ENCODE measurements at regions of chr5 and their contacts with region 1.

Region 1: GRCh38 chr5:108748401-108749127 is 867 bp downstream of the FER start:
- DNase-seq: peak; percentile 99 to 100
- H3K4me3 ChIP-seq: peak overlapping the region; percentile 86
- H3K27ac ChIP-seq: peak overlapping the region; percentile 97 to 99
- H3K4me1 ChIP-seq: peaks cover 0 to 46% (median 7%) of the 10 kb centered on the region in 4 donors
- H3K27me3 ChIP-seq: no peaks in the 10 kb centered on the region
- CTCF ChIP-seq: peak in 1 of 2 experiments; percentile 27

Region 2: DNA sequence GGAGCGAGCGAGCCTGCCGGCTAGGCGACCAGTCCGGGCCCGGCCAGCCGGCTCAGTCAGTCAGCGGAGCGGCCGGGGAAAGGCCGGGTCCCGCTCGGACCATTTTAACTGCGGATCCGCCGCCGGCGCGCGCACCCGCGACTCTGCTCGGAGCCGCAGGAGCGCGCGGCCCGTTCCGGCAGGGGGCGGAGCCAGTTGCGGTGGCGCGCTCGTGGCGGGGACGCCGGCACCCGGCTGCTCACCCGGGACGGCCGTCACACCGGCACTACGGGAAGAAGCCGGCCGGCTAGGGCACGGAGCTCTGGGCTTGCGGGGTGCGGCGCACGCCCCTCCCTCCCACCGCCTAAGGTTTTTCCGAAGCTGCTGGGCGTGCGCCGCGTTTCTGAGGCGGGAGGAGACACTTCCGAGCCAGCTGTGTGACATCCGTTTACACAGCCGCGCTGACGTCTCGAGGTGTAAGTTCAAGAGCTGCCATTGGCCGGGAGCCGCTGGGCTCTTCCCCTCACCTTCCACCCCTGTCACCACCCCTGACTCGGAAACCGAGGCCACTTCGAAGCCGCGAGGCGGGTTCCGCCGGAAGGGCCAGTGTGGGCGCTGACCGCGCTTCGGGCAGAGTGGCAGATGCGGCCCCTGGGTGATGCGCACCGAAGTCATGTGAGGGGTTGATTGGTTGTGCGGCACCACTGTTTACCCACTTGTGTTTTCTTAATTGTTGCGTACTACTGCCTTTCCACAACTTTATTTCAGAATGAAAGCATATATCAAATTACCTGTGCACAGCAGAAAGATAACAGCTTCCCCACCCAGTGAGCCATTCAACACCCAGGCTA is 366.4 kb before region 1 on chr5 and contains the start of gene FBXL17:
- intact Hi-C with region 1: loop called (anchors 10 kb)
- DNase-seq: peak; percentile 93 to 96
- H3K4me3 ChIP-seq: peak within 1 kb of the TSS; percentile 65 to 97
- H3K27ac ChIP-seq: peak within 1 kb of the TSS; percentile 90 to 100
- H3K4me1 ChIP-seq: peaks cover 0 to 39% (median 20%) of the 10 kb centered on the region in 4 donors
- H3K27me3 ChIP-seq: no peaks in the 10 kb centered on the region
- CTCF ChIP-seq: no peak

Region 3: GRCh38 chr5:108670591-108671289 is 77.8 kb before region 1 on chr5:
- intact Hi-C with region 1: no loop called
- DNase-seq: no peak
- H3K4me3 ChIP-seq: no peak overlapping the region
- H3K27ac ChIP-seq: no peak overlapping the region
- H3K4me1 ChIP-seq: no peaks in the 10 kb centered on the region
- H3K27me3 ChIP-seq: no peaks in the 10 kb centered on the region
- CTCF ChIP-seq: no peak

Region 4: DNA sequence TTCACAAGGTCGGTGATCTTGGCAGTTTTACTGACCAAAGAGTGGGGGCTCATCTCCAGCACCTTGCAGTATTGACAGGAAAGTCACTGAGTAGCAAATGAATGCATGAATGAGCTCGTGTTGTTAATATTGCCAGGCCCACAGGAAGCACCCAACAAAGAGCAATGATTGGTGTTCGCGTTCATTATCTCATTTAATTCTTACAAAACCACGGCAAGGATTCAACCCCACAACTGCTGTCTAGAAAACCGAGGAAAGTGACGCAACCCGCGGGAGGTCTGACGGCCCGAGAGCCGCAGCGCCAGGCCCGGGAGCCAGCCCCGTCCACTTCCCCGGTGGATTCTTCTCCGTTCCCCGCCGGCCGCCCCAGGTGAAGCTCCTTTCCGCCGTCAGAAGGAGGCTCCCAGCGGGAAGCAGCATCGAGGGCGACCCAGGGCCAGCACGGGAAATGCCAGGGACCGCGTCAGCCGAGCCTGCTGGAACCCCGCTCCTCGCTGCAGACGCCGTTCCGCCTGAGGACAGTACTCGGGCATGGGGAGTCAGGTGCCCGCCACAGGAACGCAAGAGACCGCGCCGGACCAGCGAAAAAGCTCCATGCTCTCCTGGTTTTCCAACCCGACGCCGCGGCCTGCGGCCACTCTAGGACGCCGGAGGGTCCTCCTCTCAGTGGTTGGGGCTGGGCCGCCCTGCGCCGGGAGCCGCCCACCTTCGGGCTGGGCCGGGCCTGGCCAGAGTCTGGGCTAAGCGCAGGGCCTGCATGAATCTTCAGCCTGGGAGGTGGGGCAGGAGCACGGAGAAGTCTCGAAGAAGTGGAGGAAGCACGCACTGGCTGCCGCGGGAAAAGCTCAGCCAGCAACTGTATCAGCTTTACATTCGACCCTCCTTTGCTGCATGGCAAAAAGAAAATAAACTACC is 20.7 kb before region 1 on chr5:
- intact Hi-C with region 1: loop called (anchors 2 kb)
- DNase-seq: peak; percentile 92 to 96
- H3K4me3 ChIP-seq: peak overlapping the region; percentile 93 to 95
- H3K27ac ChIP-seq: peak overlapping the region; percentile 96
- H3K4me1 ChIP-seq: peaks cover 0 to 19% (median 7%) of the 10 kb centered on the region in 4 donors
- H3K27me3 ChIP-seq: no peaks in the 10 kb centered on the region
- CTCF ChIP-seq: no peak

Region 5: GRCh38 chr5:109136906-109137305 is 388.3 kb after region 1 on chr5:
- intact Hi-C with region 1: no loop called
- DNase-seq: no peak
- H3K4me3 ChIP-seq: no peak overlapping the region
- H3K27ac ChIP-seq: no peak overlapping the region
- H3K4me1 ChIP-seq: peaks cover 0 to 32% (median 6%) of the 10 kb centered on the region in 4 donors
- H3K27me3 ChIP-seq: no peaks in the 10 kb centered on the region
- CTCF ChIP-seq: no peak

Region 6: DNA sequence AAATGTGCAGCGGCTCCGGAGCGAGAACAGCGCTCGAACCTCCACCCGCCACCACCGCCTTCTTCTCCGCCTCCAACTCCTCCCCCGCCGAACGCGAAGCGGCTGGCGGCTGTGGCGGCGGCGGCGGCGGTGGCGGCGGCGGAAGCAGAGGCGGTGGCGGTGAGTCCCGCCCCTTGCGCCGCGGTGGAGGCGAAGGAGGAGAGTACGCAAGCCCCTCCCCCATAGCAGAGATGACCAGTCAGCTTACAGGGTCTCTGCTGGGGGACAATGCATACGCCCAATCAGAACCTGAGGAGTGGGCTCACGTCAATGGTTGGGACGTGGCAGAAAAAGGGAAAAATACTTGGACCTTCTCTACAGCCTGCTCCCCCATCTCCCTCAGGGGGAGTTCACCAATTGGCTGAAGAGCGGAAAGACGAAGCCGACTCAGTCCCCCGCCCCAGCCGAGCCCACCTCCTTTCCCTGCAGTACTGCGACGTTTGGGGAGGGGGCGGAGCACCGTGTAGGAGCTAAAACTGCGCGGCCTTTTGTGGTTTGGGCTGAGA is 661.4 kb after region 1 on chr5 and contains the start of gene PJA2:
- intact Hi-C with region 1: loop called (anchors 1 kb)
- DNase-seq: peak; percentile 100
- H3K4me3 ChIP-seq: peak within 1 kb of the TSS; percentile 84 to 93
- H3K27ac ChIP-seq: peak within 1 kb of the TSS; percentile 97 to 100
- H3K4me1 ChIP-seq: peaks cover 0 to 59% (median 24%) of the 10 kb centered on the region in 4 donors
- H3K27me3 ChIP-seq: no peaks in the 10 kb centered on the region
- CTCF ChIP-seq: peak; percentile 34 to 52

Measured in tibial artery (tissue), 4 donors.